Mammary epithelial cell (primary cell): ENCODE measurements at regions of chr20 and their contacts with region 1.

Region 1: GRCh38 chr20:12467758-12468157 is 541.0 kb upstream of the SPTLC3 start:
- DNase-seq: no peak
- H3K4me3 ChIP-seq: no peak overlapping the region
- H3K27ac ChIP-seq: no peak overlapping the region
- H3K4me1 ChIP-seq: no peaks in the 10 kb centered on the region
- H3K27me3 ChIP-seq: peaks cover 3% of the 10 kb centered on the region
- CTCF ChIP-seq: no peak

Region 2: DNA sequence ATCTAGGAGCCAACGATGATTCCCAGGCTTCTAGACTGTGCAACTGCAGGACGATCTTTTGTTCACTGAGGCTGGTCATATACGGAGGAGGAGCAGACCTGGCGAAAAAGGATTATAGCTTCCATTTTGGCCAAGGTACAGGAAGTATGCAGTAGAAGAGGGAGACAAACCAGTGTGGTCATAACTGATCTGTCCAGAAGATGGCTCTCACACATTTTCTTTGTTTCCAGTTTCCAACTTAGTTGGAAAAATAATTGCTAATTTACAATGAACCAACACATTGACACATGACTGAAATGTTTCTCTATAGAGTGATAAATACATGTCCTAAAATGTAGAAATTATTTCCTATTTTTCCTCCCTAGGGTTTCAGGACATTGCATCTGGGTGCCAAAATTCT is 914.2 kb before region 1 on chr20:
- CTCF ChIA-PET with region 1: no interaction called
- dilution Hi-C with region 1: no loop called
- in situ Hi-C with region 1: no loop called
- intact Hi-C with region 1: no loop called
- DNase-seq: peak; percentile 21
- H3K4me3 ChIP-seq: no peak overlapping the region
- H3K27ac ChIP-seq: no peak overlapping the region
- H3K4me1 ChIP-seq: no peaks in the 10 kb centered on the region
- H3K27me3 ChIP-seq: no peaks in the 10 kb centered on the region
- CTCF ChIP-seq: peak; percentile 38 to 48

Region 3: DNA sequence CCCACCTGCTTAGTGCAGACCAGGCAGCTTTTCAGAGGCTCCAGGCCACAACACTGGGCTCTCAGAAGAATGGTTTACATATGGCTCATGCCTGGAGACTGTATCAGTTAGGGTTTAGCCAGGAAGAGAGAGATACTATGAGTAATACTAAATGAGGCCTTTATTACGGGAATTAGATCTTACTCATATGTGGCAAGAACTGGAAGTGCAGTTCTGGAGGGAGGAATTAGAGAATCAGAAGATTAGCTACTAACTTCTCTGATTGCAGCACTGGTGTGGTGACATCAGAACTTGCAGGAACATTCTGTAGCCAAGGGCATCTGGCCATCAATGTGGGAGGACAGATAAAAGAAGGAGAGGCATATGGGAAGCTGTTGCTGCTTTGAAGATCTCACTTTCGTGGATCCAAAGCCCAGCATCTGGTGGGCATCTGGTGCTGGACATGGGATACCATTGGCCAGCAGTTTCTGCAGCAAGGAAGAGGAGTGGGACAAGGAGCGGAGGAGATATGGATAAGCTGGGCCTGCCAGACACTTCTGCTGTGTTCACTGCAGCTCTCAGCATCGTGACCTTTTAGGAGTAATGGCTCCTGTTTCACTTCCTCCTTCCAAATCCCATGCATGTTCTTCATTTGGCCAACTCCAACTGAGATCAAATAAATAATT is 301.6 kb before region 1 on chr20:
- CTCF ChIA-PET with region 1: no interaction called
- dilution Hi-C with region 1: no loop called
- in situ Hi-C with region 1: no loop called
- intact Hi-C with region 1: no loop called
- DNase-seq: peak; percentile 95
- H3K4me3 ChIP-seq: no peak overlapping the region
- H3K27ac ChIP-seq: peak overlapping the region; percentile 43
- H3K4me1 ChIP-seq: peaks cover 5% of the 10 kb centered on the region
- H3K27me3 ChIP-seq: no peaks in the 10 kb centered on the region
- CTCF ChIP-seq: peak; percentile 14 to 24

Region 4: DNA sequence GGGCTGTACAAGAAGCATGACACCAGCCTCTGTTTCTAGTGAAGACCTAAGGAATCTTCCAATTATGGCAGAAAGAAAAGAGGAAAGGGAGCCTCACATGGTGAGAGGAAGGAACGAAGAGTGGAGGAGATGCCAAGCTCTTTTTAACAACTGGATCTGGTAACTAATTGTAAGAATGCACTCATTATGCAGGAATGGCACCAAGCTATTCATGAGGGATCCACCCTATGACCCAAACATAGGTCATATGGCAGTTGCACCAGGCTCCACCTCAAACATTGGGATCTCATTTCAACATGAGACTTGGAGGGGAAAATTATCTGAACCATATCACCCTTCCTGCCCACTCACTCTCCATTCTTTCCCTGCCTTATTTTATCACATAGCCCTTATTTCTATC is 45.0 kb after region 1 on chr20:
- CTCF ChIA-PET with region 1: no interaction called
- dilution Hi-C with region 1: no loop called
- in situ Hi-C with region 1: no loop called
- intact Hi-C with region 1: loop called (anchors 10 kb)
- DNase-seq: no peak
- H3K4me3 ChIP-seq: no peak overlapping the region
- H3K27ac ChIP-seq: no peak overlapping the region
- H3K4me1 ChIP-seq: no peaks in the 10 kb centered on the region
- H3K27me3 ChIP-seq: no peaks in the 10 kb centered on the region
- CTCF ChIP-seq: no peak